HepG2 (cell line): ENCODE measurements at regions of chr9 and their contacts with region 1.

Region 1: DNA sequence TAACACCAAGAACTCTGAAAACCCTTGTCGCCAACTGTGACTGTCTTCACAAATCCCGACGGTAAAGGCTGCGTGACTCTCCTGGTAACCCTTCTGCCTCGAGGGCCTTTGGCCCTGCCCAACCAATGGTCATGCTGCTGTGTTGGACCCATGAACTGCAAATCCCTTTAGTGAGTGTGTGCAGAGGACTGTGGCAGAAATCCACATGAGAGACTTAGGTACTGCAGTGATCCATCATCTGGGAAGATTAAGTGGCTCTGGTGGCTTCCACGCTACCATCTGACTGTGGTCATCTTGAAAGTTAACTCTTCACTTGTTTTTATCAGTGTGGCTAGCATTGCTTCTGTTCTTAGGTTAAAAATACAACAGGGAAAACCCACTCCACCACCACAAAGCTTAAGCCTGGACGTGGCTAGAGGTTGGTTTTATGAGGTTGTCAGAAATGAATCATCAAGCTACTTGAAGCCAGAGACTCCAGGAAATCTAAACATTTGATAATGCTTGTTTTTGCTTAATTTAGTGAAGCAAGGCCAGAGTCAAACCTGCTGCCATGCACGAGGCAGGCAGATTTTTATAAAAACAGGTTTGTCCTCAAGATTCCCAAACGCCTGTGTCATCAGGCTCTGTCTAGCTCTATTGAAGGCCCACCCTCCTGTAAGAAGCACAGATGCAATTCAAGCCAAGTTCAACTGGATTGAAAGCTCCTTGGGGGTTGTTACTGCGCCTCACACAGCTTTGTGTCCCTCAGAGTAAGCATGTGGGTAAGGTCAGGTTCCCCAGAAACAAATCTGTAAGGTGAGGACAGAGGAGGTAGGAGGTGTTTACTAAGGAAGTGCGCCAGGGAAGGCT is 52.7 kb upstream of the ERCC6L2 start:
- DNase-seq: no peak
- ATAC-seq: no peak
- H3K4me3 ChIP-seq: no peak overlapping the region
- H3K27ac ChIP-seq: no peak overlapping the region
- H3K4me1 ChIP-seq: no peaks in the 10 kb centered on the region
- H3K27me3 ChIP-seq: no peaks in the 10 kb centered on the region; a peak in 1 of 5 replicates
- CTCF ChIP-seq: no peak
- EP300 ChIP-seq: no peak
- POLR2A ChIP-seq: no peak
- RAD21 ChIP-seq: no peak

Region 2: DNA sequence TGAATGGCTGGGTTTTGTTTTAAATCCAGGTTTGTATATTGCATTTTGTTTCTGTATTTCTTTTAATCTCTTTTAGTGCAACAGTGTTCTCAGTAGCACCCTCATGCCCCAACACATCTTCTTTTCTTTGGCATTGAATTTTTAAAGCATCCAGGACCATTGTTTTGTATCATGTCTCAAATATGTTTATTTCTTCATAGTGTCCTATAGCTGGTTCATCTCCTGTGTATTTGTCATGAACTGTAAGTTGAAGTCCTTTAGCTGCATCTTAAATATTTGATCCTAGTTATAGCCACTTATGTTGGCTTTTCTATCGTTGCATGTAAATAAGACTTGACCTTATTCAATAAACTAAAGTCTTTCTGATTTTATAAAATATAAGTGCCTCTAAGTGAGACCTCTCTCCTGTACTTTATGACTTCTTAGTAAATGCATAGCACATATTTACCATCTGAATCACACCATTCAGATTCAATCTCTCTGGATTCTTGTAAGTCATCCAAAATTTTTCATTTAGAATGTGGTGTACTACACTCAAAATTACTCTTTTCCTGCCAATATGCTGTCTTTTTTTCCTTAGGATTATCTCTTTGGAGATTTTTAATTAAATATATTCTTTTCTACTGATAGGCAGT is 31.7 kb after region 1 on chr9:
- CTCF ChIA-PET with region 1: no interaction called
- POLR2A ChIA-PET with region 1: no interaction called
- in situ Hi-C with region 1: no loop called
- intact Hi-C with region 1: loop called (anchors 1 kb)
- DNase-seq: no peak
- ATAC-seq: no peak
- H3K4me3 ChIP-seq: no peak overlapping the region
- H3K27ac ChIP-seq: no peak overlapping the region
- H3K4me1 ChIP-seq: peaks cover 11% of the 10 kb centered on the region
- H3K27me3 ChIP-seq: no peaks in the 10 kb centered on the region
- CTCF ChIP-seq: no peak
- EP300 ChIP-seq: no peak
- POLR2A ChIP-seq: no peak
- RAD21 ChIP-seq: no peak